PC-9 (cell line): ENCODE measurements at regions of chr12 and their contacts with region 1.

Region 1: DNA sequence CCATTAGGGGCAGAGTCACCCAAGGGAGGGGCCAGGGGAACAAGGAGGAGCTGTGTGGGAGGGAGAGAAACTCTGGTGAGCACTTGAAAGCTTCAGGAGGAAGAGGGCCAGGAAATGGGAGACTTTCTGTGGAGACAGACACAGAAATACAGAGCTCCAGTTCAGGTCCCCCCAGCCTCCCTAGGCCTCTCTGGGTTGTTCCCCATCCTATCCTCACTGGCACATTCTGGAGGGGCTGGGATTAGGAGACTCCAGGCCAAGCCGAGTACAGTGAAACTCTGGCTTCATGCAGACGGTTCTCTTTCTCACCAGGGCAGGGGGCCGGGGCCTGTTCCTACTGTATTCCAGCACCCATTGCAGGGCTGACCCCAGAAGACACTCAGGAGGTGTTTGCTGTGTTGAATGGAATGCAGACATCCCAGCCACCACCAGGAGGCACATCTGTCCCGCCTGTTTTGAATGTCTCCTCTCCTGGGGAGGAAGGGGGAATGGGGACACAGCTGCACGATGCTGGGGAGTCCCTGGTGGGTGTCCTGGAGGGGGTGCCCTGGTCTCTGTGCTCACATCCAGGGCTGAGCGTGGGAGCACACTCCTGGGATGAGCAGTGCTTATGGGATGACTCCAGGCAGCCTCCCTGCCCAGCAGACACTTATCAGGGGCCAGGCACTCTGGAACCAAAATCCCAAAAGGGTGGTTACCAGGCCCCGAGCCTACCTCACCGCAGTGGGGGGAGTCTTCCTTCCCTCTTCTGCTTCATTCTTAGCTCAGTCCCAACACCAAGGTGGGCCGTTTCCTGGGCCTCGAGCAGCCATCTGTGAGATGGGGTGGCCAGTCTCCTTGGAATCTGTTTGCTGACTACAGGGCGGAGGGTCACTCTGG is 5.5 kb upstream of the KRT84 start:
- DNase-seq: peak in 1 of 2 experiments; percentile 31
- H3K4me3 ChIP-seq: no peak overlapping the region
- H3K27ac ChIP-seq: no peak overlapping the region
- H3K4me1 ChIP-seq: no peaks in the 10 kb centered on the region
- H3K27me3 ChIP-seq: no peaks in the 10 kb centered on the region
- CTCF ChIP-seq: peak; percentile 83

Region 2: GRCh38 chr12:52320784-52321400 is 70.1 kb before region 1 on chr12 and contains the start of gene KRT83:
- CTCF ChIA-PET with region 1: interaction called, 17 read pairs
- POLR2A ChIA-PET with region 1: no interaction called
- intact Hi-C with region 1: no loop called
- DNase-seq: no peak
- H3K4me3 ChIP-seq: no peak within 1 kb of the TSS
- H3K27ac ChIP-seq: no peak within 1 kb of the TSS
- H3K4me1 ChIP-seq: no peaks in the 10 kb centered on the region
- H3K27me3 ChIP-seq: no peaks in the 10 kb centered on the region
- CTCF ChIP-seq: no peak
- total RNA-seq, gene KRT83: 0.43 TPM in 1 of 2 replicates, not detected in the other

Region 3: DNA sequence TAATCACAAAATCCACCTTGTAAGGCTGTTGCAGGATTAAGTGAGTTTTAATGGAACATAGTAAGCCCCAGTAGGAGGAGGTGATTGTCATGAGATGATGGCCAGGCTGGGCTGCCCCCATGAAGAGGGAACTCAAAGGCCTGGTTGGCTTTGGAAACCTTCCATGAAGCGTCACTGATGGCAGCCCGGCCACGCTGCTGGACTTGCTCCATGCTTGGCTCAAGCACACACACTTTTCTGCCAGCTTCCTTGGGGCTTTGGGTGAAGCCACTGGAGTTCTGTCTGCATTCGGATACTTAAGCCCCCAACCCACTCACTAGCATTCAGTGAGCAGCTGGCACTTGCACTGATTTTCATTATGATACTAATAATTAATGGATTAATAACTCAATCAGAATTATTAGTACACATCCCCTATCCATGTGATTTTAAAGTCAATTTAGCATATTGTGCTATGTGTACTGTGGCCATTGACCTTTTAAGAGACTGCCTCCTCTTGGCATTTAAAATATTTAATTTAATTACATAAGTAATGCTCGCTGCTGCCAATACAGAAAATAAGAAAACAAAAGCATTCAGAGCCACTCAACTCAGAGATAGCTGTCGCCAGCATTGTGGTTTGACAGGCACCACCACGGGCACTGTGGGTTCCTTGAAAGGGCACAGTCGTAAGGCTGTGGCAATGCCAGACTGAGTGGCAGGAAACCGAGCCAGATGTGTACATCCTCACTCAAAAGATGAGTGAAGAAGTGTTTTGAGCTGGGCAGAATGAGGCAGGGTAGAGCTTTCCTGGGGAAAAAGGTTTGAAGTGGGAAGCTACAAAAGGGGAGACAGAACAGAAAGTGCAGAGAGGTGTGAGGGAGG is 39.5 kb before region 1 on chr12:
- CTCF ChIA-PET with region 1: no interaction called
- POLR2A ChIA-PET with region 1: no interaction called
- intact Hi-C with region 1: no loop called
- DNase-seq: no peak
- H3K4me3 ChIP-seq: no peak overlapping the region
- H3K27ac ChIP-seq: no peak overlapping the region
- H3K4me1 ChIP-seq: peaks cover 6% of the 10 kb centered on the region
- H3K27me3 ChIP-seq: no peaks in the 10 kb centered on the region
- CTCF ChIP-seq: no peak

Region 4: DNA sequence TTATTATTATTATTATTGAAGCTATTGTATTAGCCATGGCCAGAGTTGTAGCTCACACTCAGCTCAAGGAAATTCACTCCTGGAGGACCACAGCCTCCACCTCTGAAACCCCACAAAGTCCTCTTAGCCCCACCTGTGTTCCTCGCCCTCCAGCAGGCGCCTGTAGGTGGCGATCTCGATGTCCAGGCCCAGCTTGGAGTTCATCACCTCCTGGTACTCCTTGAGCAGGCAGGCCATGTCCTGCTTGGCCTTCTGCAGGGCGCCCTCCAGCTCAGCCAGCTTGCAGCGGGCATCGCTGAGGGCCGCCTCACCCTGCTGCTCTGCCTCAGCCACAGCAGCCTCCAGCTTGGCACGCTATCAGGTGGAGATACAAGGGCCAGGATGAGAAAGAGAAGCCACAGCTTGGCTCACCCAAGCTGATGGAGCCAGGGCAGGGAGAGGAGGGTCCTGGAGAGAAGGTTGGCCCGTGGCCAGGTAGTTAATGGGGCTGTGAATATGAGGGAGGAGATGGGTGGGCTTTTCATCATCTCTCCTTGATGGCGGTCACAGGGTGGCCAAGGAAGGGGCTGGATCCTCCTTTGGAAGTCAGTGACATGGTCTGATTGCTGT is 28.8 kb before region 1 on chr12:
- CTCF ChIA-PET with region 1: no interaction called
- POLR2A ChIA-PET with region 1: no interaction called
- intact Hi-C with region 1: no loop called
- DNase-seq: no peak
- H3K4me3 ChIP-seq: no peak overlapping the region
- H3K27ac ChIP-seq: no peak overlapping the region
- H3K4me1 ChIP-seq: no peaks in the 10 kb centered on the region
- H3K27me3 ChIP-seq: no peaks in the 10 kb centered on the region
- CTCF ChIP-seq: peak; percentile 41; the same call in 1 of the 2 replicates

Region 5: GRCh38 chr12:52407918-52408317 is 16.9 kb after region 1 on chr12:
- CTCF ChIA-PET with region 1: no interaction called
- POLR2A ChIA-PET with region 1: no interaction called
- intact Hi-C with region 1: no loop called
- DNase-seq: no peak
- H3K4me3 ChIP-seq: no peak overlapping the region
- H3K27ac ChIP-seq: no peak overlapping the region
- H3K4me1 ChIP-seq: no peaks in the 10 kb centered on the region
- H3K27me3 ChIP-seq: no peaks in the 10 kb centered on the region
- CTCF ChIP-seq: no peak

Region 6: DNA sequence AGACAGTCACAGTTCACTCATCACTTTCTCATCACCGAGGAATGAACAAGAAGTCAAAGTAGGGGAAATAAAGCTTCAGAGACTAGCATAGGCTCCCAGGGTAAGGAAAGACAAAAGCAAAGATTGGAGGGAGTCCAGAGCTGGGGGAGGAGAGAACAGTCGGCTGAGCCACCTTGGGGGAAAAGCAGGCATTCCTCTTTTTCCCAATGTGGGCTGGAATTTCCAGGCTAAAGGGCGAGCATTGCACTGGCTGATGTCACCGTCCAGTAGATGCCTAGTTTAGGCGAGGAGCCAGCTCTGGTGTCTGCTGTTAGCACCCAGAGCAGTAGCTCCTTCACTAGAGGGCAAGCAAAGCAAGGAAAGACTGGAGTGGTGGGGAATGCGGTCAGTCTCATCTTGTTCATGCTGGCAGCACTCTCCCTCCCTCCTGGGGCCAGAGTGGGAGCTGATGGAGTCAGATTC is 51.7 kb after region 1 on chr12:
- CTCF ChIA-PET with region 1: interaction called, 7 read pairs
- POLR2A ChIA-PET with region 1: interaction called, 4 read pairs
- intact Hi-C with region 1: loop called (anchors 5 kb)
- DNase-seq: peak; percentile 82 to 92
- H3K4me3 ChIP-seq: peak overlapping the region; percentile 17; the same call in 1 of the 2 replicates
- H3K27ac ChIP-seq: peak overlapping the region; percentile 97
- H3K4me1 ChIP-seq: peaks cover 74% of the 10 kb centered on the region
- H3K27me3 ChIP-seq: no peaks in the 10 kb centered on the region
- CTCF ChIP-seq: no peak; the same call in 1 of the 2 replicates